Activated naive CD4-positive, alpha-beta T cell treated with anti-CD3 and anti-CD28 coated beads for 36 hours (primary cell): ENCODE measurements at regions of chrX and their contacts with region 1.

Region 1: GRCh38 chrX:106894392-106894909 is 8.7 kb downstream of the RIPPLY1 start:
- DNase-seq: peak; percentile 64
- H3K4me3 Mint-ChIP-seq: no peak overlapping the region
- H3K27ac Mint-ChIP-seq: no peak overlapping the region
- H3K4me1 Mint-ChIP-seq: peaks cover 5% of the 10 kb centered on the region
- H3K27me3 Mint-ChIP-seq: no peaks in the 10 kb centered on the region

Region 2: GRCh38 chrX:106952988-106953387 is 58.5 kb after region 1 on chrX:
- CTCF ChIA-PET with region 1: interaction called, 8 read pairs
- intact Hi-C with region 1: loop called (anchors 1 kb)
- DNase-seq: no peak
- H3K4me3 Mint-ChIP-seq: no peak overlapping the region
- H3K27ac Mint-ChIP-seq: no peak overlapping the region
- H3K4me1 Mint-ChIP-seq: no peaks in the 10 kb centered on the region
- H3K27me3 Mint-ChIP-seq: no peaks in the 10 kb centered on the region

Region 3: DNA sequence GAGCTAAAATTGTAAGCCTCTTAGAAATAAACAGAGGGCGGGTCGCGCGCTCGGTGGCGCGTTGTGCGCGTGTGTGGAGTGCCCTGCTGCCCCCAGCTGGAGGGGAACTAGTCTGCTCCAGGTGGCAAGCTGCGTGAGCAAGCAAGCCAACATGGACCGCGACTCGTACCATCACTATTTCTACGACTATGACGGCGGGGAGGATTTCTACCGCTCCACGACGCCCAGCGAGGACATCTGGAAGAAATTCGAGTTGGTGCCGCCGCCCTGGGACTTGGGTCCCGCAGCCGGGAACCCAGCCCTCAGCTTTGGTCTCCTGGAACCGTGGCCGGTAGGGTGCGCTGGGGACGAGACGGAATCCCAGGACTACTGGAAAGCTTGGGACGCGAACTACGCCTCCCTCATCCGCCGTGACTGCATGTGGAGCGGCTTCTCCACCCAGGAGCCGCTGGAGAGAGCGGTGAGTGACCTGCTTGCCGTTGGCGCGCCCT is 378.0 kb after region 1 on chrX:
- CTCF ChIA-PET with region 1: no interaction called
- intact Hi-C with region 1: loop called (anchors 2 kb)
- DNase-seq: peak; percentile 39
- H3K4me3 Mint-ChIP-seq: peak overlapping the region; percentile 32
- H3K27ac Mint-ChIP-seq: no peak overlapping the region
- H3K4me1 Mint-ChIP-seq: no peaks in the 10 kb centered on the region
- H3K27me3 Mint-ChIP-seq: peaks cover 16% of the 10 kb centered on the region

Region 4: DNA sequence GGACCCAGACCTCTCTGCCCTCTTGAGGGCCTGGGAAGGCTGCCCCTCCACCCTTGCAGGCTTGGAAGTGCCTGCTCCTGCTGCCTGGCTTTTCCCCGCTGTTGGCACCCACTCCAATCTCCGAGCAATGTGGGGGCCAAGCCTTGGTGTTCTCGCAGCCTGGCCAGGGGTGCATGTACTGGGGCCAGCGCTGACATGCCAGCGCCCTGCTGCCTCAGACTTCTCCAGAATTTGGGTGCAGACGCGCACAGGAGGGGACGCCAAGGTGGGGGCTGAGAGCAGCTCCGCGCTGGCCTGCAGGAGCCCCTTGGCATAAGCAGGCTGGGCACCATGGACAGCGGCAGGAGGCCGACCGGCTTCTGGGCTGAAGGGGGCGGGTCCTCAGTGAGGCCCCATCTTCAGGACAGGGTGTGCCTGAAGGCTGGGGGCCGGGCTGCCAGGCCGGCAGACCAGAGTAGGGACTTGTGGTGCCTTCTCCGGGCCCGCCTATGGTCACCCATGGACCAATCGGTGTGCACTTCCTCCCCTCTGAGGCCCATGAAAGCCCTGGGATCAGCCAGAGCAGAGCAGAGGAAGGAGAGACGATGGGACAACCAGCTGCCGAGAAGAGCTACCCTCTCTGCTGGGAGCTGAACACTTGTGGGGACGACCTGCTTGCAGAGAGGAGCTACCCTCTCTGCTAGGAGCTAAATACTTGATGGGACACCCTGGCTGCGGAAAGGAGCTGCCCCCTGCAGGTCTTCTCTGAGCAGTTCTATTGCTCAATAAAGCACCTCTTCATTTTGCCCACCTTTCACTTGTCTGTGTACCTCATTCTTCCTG is 430.3 kb after region 1 on chrX:
- CTCF ChIA-PET with region 1: interaction called, 4 read pairs
- intact Hi-C with region 1: loop called (anchors 2 kb)
- DNase-seq: peak; percentile 34
- H3K4me3 Mint-ChIP-seq: no peak overlapping the region
- H3K27ac Mint-ChIP-seq: no peak overlapping the region
- H3K4me1 Mint-ChIP-seq: no peaks in the 10 kb centered on the region
- H3K27me3 Mint-ChIP-seq: no peaks in the 10 kb centered on the region

Region 5: DNA sequence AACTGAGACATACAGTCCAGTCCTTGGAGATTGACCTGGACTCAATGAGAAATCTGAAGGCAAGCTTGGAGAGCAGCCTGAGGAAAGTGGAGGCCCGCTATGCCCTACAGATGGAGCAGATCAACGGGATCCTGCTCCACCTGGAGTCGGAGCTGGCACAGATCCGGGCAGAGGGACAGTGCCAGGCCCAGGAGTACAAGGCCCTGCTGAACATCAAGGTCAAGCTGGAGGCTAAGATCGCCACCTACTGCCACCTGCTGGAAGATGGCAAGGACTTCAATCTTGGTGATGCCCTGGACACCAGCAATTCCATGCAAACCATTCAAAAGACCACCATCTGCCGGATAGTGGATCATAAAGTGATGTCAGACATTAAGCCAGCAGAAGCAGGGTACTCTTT is 534.6 kb after region 1 on chrX:
- CTCF ChIA-PET with region 1: interaction called, 5 read pairs
- intact Hi-C with region 1: loop called (anchors 2 kb)
- DNase-seq: peak; percentile 46
- H3K4me3 Mint-ChIP-seq: no peak overlapping the region
- H3K27ac Mint-ChIP-seq: no peak overlapping the region
- H3K4me1 Mint-ChIP-seq: no peaks in the 10 kb centered on the region
- H3K27me3 Mint-ChIP-seq: no peaks in the 10 kb centered on the region

Region 6: GRCh38 chrX:107894038-107894437 is 999.6 kb after region 1 on chrX:
- CTCF ChIA-PET with region 1: no interaction called
- intact Hi-C with region 1: loop called (anchors 10 kb)
- DNase-seq: peak; percentile 22
- H3K4me3 Mint-ChIP-seq: no peak overlapping the region
- H3K27ac Mint-ChIP-seq: no peak overlapping the region
- H3K4me1 Mint-ChIP-seq: no peaks in the 10 kb centered on the region
- H3K27me3 Mint-ChIP-seq: no peaks in the 10 kb centered on the region

Region 7: DNA sequence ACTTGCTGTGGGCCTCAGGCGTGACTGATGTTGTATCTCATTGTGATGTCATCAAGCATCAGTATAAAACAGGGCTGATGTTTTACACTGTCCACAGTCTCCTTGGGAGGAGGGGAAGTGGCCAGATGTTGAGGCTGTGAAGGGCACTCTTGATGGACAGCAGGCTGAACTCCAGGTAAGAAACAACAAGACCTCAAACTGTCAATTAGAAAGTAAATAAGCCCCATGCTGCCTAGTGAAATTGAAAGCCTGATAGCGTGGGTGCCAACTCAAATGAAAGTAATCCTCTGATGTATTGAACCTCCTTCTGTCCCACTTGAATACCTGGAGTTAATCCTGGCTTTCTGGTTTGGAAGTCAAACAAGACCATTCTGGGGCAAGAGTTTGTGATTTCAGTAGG is 1170.2 kb after region 1 on chrX:
- CTCF ChIA-PET with region 1: no interaction called
- intact Hi-C with region 1: loop called (anchors 5 kb)
- DNase-seq: no peak
- H3K4me3 Mint-ChIP-seq: no peak overlapping the region
- H3K27ac Mint-ChIP-seq: no peak overlapping the region
- H3K4me1 Mint-ChIP-seq: peaks cover 6% of the 10 kb centered on the region
- H3K27me3 Mint-ChIP-seq: no peaks in the 10 kb centered on the region

Region 8: GRCh38 chrX:108097380-108097779 is 1202.9 kb after region 1 on chrX:
- CTCF ChIA-PET with region 1: no interaction called
- intact Hi-C with region 1: no loop called
- DNase-seq: no peak
- H3K4me3 Mint-ChIP-seq: no peak overlapping the region
- H3K27ac Mint-ChIP-seq: no peak overlapping the region
- H3K4me1 Mint-ChIP-seq: peaks cover 13% of the 10 kb centered on the region
- H3K27me3 Mint-ChIP-seq: no peaks in the 10 kb centered on the region